Astrocyte of the cerebellum (primary cell): ENCODE measurements at regions of chr6 and their contacts with region 1.

Region 1: DNA sequence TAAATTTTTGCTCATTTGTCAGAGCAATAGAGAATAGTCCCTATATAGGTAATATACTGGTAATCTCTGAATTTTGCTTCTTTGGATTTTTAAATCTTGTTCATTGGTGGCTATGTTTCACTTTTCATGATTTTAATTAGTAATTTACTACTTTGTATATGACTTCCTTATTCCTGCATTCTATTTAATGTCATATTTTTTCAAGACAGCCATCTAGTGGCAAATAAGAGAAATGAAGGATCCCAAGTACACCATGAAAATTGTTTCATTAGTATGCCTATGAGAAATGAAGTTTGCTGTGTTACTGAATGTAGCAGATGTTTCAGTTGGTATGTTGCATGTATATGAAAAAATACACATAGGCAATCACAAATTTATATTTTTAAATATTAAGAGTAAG is 82.4 kb downstream of the ZNF292 start:
- DNase-seq: peak; percentile 3
- H3K4me3 ChIP-seq: no peak overlapping the region
- CTCF ChIP-seq: no peak

Region 2: DNA sequence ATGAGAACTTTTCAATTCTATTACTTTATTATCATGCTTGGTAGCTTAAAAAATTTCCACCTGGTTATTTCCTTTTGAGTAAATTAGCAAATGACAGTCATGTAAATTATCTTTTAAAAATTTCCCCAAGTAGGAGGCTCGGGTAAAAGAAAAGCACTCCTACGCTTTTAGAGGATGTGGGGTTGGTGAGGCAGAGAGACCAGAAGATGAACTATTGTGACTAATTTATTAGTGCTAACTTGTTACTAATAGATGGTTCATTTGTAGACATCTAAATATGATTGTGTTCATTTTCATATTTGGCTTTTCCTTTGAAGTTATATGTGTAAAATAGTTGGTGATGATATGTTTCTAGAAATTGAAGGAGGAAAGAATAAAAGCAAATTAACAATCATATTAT is 55.5 kb before region 1 on chr6:
- in situ Hi-C with region 1: loop called (anchors 5 kb)
- DNase-seq: no peak
- H3K4me3 ChIP-seq: no peak overlapping the region
- CTCF ChIP-seq: no peak

Region 3: DNA sequence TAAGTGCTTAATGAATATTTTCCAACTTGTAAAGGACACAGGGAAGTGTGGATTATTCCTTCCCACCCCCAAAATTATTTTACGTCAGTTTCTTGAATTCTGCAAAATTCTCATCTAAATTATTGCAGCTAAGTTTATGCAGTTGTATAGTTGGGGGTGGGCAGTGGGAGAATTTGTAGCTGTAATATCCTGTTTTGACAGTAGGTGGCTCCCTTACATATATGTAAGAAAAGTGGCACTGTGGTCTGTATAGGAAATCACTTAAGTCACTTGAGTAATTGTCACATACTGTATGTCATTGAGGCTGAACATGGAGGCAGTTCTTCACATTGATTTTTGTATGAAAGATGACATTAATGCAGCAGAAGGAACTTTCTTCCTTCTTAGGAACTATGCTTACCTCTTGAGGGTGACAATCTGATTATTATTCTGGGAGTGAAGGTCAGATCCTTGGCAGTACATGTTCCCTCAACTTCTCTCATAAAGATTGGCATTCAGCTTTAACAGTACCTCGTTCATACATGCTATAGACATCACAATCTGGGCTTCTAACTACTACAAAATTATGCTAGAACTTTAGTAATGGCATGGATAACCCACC is 155.3 kb after region 1 on chr6:
- in situ Hi-C with region 1: no loop called
- DNase-seq: peak; percentile 57
- H3K4me3 ChIP-seq: no peak overlapping the region
- CTCF ChIP-seq: peak; percentile 61